Common myeloid progenitor, CD34-positive (primary cell): ENCODE measurements at regions of chr2 and their contacts with region 1.

Region 1: GRCh38 chr2:162221064-162221463 is 22.2 kb downstream of the FAP start:
- DNase-seq: peak; percentile 39 to 58 (median 50)
- H3K4me3 ChIP-seq: no peak overlapping the region
- H3K27ac ChIP-seq: no peak overlapping the region
- H3K4me1 ChIP-seq: no peaks in the 10 kb centered on the region
- H3K27me3 ChIP-seq: no peaks in the 10 kb centered on the region

Region 2: DNA sequence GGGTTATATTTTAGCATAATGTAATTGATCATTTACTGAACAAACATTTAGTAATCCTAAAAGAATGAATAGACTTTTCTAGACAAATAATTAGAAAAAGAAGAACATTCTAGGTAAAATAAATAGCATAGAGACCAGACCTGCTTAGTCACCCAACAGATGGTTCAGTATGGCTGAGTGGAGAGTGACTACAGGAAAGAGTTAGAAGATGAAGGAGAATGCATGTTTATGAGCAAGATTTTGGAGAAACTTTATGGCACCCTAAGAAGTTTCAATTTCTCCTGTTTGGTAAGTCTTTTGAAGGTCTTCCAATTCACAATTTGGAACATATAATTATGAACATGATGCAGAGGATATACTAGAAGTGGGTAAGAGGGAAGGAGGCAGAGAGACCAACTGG is 10.7 kb before region 1 on chr2:
- CTCF ChIA-PET with region 1: interaction called, 14 read pairs
- POLR2A ChIA-PET with region 1: no interaction called
- DNase-seq: peak in 2 of 3 donors; percentile 21 to 39
- H3K4me3 ChIP-seq: no peak overlapping the region
- H3K27ac ChIP-seq: no peak overlapping the region
- H3K4me1 ChIP-seq: peaks cover 0 to 12% (median 0%) of the 10 kb centered on the region in 4 experiments
- H3K27me3 ChIP-seq: no peaks in the 10 kb centered on the region

Region 3: GRCh38 chr2:162233197-162233596 is 12.1 kb after region 1 on chr2:
- CTCF ChIA-PET with region 1: interaction called, 20 read pairs
- POLR2A ChIA-PET with region 1: no interaction called
- DNase-seq: no peak
- H3K4me3 ChIP-seq: no peak overlapping the region
- H3K27ac ChIP-seq: no peak overlapping the region
- H3K4me1 ChIP-seq: no peaks in the 10 kb centered on the region
- H3K27me3 ChIP-seq: peaks cover 0 to 2% (median 0%) of the 10 kb centered on the region in 5 experiments

Region 4: GRCh38 chr2:162312853-162313252 is 91.8 kb after region 1 on chr2:
- CTCF ChIA-PET with region 1: no interaction called
- POLR2A ChIA-PET with region 1: no interaction called
- DNase-seq: no peak
- H3K4me3 ChIP-seq: no peak overlapping the region
- H3K27ac ChIP-seq: no peak overlapping the region
- H3K4me1 ChIP-seq: peaks cover 11 to 25% (median 20%) of the 10 kb centered on the region in 4 experiments
- H3K27me3 ChIP-seq: no peaks in the 10 kb centered on the region